Activated CD4-positive, alpha-beta T cell treated with anti-CD3 and anti-CD28 coated beads, Interleukin-2, amount 10 ng/mL, durations not matched to agents 24 days and 14 days (primary cell): ENCODE measurements at regions of chr2 and their contacts with region 1.

Region 1: GRCh38 chr2:41840702-41841551 is 206.9 kb upstream of the PKDCC start:
- DNase-seq: peak; percentile 99
- H3K4me3 Mint-ChIP-seq: peak overlapping the region; percentile 94
- H3K27ac Mint-ChIP-seq: peak overlapping the region; percentile 87
- H3K4me1 Mint-ChIP-seq: peaks cover 15% of the 10 kb centered on the region
- H3K27me3 Mint-ChIP-seq: peaks cover 20% of the 10 kb centered on the region

Region 2: GRCh38 chr2:41853427-41854216 is 12.7 kb after region 1 on chr2:
- intact Hi-C with region 1: no loop called
- DNase-seq: peak; percentile 64
- H3K4me3 Mint-ChIP-seq: no peak overlapping the region
- H3K27ac Mint-ChIP-seq: no peak overlapping the region
- H3K4me1 Mint-ChIP-seq: no peaks in the 10 kb centered on the region
- H3K27me3 Mint-ChIP-seq: peaks cover 15% of the 10 kb centered on the region

Region 3: DNA sequence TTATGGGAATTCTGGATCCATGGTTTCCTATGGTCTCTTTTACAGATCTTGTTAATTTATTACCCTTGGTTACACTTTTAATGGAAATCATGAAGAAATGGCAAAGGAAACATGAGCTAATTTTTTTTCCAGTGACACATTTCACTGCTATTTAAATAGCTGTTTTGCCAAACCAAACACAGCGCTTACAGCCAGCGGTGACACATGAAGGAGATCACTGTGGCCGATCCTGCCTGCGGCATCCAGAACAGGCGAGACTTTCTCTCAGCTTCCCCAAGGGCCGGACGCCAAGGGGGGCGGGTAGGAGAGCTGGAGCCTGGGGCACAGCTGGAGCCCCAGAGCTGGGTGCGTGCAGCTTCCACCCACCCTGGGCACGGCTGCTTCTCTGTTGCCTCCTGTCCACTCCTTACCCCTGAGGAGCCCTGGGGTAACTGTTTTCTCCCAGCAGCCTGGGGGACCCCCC is 125.5 kb after region 1 on chr2:
- intact Hi-C with region 1: no loop called
- DNase-seq: no peak
- H3K4me3 Mint-ChIP-seq: no peak overlapping the region
- H3K27ac Mint-ChIP-seq: no peak overlapping the region
- H3K4me1 Mint-ChIP-seq: no peaks in the 10 kb centered on the region
- H3K27me3 Mint-ChIP-seq: peaks cover 2% of the 10 kb centered on the region

Region 4: DNA sequence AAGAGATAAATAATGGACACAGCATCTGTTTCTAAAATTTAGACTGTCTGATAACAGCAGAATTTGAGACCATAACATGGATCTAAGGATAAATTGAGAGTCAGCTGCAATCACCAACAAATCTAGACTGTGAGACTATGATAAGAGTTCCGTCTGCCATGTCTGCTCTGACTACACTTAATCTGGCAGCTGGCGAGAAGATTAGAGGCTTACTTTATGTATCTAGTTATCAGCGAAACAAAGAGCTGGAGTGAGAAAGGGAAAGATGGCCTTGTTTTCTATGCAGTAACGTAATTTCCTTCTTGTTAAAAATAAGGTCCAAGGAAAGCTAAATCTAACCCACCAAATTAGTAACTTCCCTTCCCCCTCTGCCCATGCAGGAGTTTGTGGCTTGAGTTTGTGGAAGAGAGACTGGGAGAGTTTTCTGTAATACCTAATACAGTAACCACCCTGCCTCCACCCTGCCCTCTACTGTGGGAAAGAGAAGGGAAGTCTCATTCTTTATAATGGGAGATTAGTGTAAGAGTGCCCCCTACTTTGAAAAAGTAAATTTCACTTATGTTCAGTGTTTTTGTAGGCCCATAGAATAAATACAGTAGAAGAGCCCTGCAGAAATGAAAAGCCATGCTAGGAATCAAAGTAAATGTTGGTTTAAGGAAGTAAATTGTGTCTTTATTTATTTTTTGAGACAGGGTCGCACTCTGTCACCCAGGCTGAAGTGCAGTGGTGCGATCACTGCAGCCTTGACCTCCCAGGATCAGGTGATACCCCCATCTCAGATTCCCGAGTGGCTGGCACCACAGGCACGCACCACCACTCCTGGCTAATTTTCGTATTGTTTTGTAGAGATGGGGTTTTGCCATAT is 355.7 kb after region 1 on chr2:
- intact Hi-C with region 1: loop called (anchors 10 kb)
- DNase-seq: peak; percentile 80
- H3K4me3 Mint-ChIP-seq: no peak overlapping the region
- H3K27ac Mint-ChIP-seq: no peak overlapping the region
- H3K4me1 Mint-ChIP-seq: peaks cover 50% of the 10 kb centered on the region
- H3K27me3 Mint-ChIP-seq: no peaks in the 10 kb centered on the region